Heart left ventricle (tissue), 16 donors: ENCODE measurements at regions of chr20 and their contacts with region 1.

Region 1: DNA sequence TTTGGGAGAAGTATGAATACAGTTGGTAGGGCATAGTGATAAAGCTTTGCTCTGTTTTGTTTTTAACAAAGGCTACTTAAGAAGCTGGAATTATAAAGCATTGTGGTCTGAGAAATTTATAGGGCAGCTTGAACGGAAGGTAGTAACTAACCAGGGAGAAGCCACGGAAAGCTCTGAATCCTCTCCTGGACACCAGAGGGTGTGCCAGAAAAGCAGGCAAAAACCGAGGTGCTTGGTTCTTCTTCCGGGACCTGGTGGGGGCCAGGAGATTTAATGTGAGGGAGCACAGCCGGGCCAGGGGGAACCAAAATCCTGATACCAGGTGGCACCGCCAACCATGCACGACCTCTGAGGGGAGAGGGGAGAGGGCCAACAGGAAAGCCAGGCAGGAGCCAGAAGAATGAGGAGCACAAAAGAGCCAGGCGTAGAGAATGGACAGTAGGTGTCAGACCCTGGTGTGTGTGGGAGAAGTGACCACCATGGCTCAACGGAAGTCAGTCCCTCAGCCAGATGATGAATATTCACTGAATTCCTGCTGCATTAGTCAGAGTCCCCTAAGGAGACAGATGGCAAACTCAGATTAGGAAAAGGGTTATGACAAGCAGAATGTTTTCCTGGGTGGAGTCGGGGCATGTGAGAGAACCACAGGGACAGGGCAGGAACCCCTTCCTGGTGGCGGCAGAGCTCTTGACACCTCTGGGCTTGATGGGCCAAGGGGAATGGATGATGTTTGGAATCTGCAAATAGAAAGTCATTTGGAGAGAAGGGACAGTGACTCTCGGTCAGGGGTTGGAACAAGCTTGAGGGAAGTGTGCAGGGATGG is 262.3 kb downstream of the ZNF217 start:
- DNase-seq: peak in 1 of 5 donors; percentile 18
- ATAC-seq: peak in 3 of 4 donors; percentile 39 to 80 (median 66)
- H3K4me3 ChIP-seq: no peak overlapping the region
- H3K27ac ChIP-seq: peak overlapping the region in 9 of 12 donors; percentile 6 to 54 (median 25)
- H3K4me1 ChIP-seq: peaks cover 0 to 32% (median 7%) of the 10 kb centered on the region in 12 donors
- H3K27me3 ChIP-seq: no peaks in the 10 kb centered on the region
- CTCF ChIP-seq: no peak
- POLR2A ChIP-seq: no peak

Region 2: DNA sequence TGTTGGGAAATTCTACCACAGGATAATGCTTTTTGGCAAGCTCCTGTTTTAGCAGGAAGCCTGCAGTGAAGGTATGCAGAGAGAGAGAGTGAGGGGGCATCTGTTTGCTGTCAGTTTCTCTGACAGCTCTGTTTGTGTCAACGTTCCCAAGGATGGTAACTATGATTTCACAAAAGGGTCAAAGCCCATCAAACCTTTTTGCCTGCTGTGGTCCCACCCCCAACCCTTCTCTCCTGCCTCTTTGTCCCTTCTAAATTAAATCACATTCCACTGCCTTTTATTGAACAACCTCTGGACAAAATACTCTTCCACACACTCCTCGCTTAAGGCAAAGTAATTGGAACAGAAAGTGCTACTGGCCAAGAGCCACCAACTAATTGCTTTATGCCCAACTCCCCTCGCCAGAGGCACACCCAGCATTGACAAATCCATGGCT is 230.9 kb before region 1 on chr20:
- intact Hi-C with region 1: no loop called
- DNase-seq: no peak
- ATAC-seq: no peak
- H3K4me3 ChIP-seq: no peak overlapping the region
- H3K27ac ChIP-seq: no peak overlapping the region
- H3K4me1 ChIP-seq: peaks cover 0 to 22% (median 6%) of the 10 kb centered on the region in 12 donors
- H3K27me3 ChIP-seq: no peaks in the 10 kb centered on the region
- CTCF ChIP-seq: no peak
- POLR2A ChIP-seq: no peak

Region 3: GRCh38 chr20:53216856-53217576 is 114.3 kb before region 1 on chr20:
- intact Hi-C with region 1: no loop called
- DNase-seq: peak; percentile 46 to 84 (median 64)
- ATAC-seq: peak in 3 of 4 donors; percentile 81 to 84 (median 82)
- H3K4me3 ChIP-seq: peak overlapping the region in 9 of 12 donors; percentile 5 to 32 (median 24)
- H3K27ac ChIP-seq: no peak overlapping the region
- H3K4me1 ChIP-seq: peaks cover 0 to 8% (median 5%) of the 10 kb centered on the region in 12 donors
- H3K27me3 ChIP-seq: peaks cover 0 to 10% (median 0%) of the 10 kb centered on the region in 9 donors
- CTCF ChIP-seq: peak; percentile 80 to 94 (median 88)
- POLR2A ChIP-seq: no peak

Region 4: DNA sequence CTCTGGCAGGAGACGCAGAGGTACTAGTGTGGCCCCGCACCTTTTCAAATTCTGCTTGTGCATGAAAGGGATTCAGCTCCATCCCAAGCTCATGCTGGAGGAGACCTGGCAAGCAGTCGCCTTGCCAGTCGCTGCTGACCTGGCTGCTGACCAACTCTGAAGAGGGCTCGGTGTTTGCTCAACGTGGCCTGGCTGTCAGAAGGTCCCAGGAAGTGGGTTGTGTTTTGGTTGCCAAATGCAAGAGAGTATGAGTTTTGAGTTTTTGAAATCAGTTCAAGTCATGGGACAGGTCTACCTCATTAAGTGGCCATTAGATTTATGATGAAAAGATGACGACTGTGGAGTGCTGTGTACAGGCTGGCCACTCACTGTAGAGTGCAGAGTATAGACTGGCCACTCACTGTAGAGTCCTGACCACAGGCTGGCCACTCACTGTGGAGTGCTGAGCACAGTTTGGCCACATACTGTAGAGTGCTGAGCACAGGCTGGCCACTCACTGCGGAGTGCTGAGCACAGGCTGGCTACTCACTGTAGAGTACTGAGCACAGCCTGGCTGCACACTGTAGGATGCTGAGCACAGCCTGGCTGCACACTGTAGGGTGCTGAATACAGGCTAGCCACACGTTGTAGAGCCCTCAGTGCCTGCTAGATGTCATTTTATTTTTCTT is 68.4 kb after region 1 on chr20:
- intact Hi-C with region 1: loop called in 1 of 10 experiments (anchors 10 kb)
- DNase-seq: peak in 1 of 5 donors; percentile 55
- ATAC-seq: peak in 1 of 4 donors; percentile 48
- H3K4me3 ChIP-seq: no peak overlapping the region
- H3K27ac ChIP-seq: no peak overlapping the region
- H3K4me1 ChIP-seq: peaks cover 0 to 10% (median 2%) of the 10 kb centered on the region in 12 donors
- H3K27me3 ChIP-seq: no peaks in the 10 kb centered on the region
- CTCF ChIP-seq: no peak
- POLR2A ChIP-seq: no peak